Testis (tissue), 5 donors: ENCODE measurements at regions of chr22 and their contacts with region 1.

Region 1: DNA sequence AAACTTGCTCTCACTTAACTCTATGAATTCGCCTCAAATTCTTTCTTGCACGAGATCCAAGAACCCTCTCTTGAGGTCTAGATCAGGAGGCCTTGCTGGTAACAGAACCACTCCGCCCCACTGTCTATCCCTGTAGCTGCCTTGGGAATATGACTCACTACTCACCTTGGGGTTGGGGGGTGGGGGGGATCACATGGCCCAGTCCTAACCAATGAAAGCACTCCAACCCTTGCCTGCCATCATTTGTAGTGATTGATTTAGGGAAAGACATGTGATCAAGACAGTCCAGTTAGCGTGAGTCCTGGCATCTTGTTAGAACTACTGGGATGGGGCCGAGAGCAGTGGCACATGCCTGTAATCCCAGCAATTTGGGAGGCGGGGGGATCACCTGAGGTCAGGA is 4.8 kb upstream of the MRTFA start:
- DNase-seq: no peak
- H3K4me3 ChIP-seq: no peak overlapping the region
- H3K27ac ChIP-seq: no peak overlapping the region
- H3K4me1 ChIP-seq: peaks cover 7% of the 10 kb centered on the region
- H3K27me3 ChIP-seq: no peaks in the 10 kb centered on the region
- CTCF ChIP-seq: no peak
- POLR2A ChIP-seq: no peak

Region 2: DNA sequence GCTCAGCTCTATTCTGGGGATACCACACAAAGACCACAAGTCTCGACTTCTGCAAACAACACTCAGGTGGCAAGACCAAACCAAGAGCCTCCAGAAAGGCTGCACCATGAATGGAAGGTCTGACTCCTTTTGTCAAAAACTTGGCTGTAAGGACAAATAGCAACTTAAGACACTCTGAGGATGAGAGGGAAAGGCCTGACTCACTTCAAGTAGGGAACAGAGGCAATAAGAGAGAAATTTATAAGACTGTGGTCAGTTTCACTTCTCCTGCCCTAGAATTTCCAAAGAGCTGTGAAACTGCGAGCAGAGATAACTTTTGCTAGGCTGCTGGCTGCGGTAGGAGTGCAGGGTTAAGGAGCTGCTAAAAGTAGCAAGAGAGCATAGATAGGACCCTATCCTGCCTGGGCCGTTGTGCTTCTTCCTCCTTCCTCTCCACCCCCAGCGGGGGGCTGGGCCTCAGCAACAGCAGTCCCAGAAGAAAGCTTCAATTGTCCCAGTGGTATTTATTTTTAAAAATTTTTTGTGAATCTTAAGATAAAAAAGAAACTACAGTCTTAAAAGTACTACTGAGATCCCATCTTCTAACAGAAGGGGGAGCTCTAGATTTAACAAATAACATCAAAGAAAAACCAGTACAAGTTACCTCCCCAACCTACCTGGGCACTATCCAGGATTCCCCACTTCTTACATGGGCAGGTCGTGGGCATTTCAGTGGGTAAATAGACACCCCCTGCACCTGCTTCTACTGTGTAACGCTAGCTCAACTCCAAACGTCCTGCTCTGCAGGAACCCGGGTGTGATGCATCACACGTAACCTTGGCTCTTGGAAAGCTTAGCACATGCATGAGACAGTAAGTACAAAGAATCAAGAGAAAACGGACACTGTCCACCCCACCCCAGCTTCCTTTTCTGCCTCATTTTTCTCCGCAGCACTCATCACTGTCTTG is 204.5 kb before region 1 on chr22:
- intact Hi-C with region 1: loop called (anchors 5 kb)
- DNase-seq: peak; percentile 77
- H3K4me3 ChIP-seq: no peak overlapping the region
- H3K27ac ChIP-seq: peak overlapping the region; percentile 72 to 83
- H3K4me1 ChIP-seq: peaks cover 24% of the 10 kb centered on the region
- H3K27me3 ChIP-seq: no peaks in the 10 kb centered on the region
- CTCF ChIP-seq: peak; percentile 55 to 73 (median 70)
- POLR2A ChIP-seq: no peak

Region 3: DNA sequence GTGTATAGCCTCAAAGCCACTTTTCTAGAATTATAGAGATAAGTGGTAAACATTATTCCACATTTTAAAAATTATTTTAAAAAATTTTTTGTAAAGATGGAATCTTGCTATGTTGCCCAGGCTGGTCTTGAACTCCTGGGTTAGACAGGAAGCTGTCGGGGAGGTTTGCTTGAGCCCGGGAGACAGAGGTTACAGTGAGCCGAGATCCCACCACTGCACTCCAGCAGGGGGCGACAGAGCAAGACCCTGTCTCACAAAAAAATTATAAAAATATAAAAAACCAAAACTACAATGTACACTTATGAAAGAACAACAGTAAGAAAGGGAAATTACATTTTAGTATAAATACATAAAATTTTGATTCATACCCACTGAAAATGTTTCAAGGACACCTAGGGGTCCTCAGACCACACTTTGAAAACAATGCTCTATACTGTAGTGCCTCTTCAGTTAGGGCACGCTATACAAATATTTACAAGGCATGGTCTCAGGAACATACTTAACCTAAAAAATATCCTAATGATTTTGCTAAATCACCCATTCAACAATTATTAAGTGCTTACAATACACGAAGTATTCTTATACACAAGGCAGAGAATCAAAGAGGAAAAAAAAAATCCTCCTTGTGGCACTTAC is 115.9 kb before region 1 on chr22:
- intact Hi-C with region 1: loop called (anchors 10 kb)
- DNase-seq: peak; percentile 76
- H3K4me3 ChIP-seq: no peak overlapping the region
- H3K27ac ChIP-seq: no peak overlapping the region
- H3K4me1 ChIP-seq: no peaks in the 10 kb centered on the region
- H3K27me3 ChIP-seq: no peaks in the 10 kb centered on the region
- CTCF ChIP-seq: peak; percentile 59 to 75 (median 61)
- POLR2A ChIP-seq: no peak

Region 4: GRCh38 chr22:40797427-40797826 is 156.2 kb after region 1 on chr22:
- intact Hi-C with region 1: no loop called
- DNase-seq: no peak
- H3K4me3 ChIP-seq: no peak overlapping the region
- H3K27ac ChIP-seq: no peak overlapping the region
- H3K4me1 ChIP-seq: peaks cover 8% of the 10 kb centered on the region
- H3K27me3 ChIP-seq: no peaks in the 10 kb centered on the region
- CTCF ChIP-seq: no peak
- POLR2A ChIP-seq: no peak